ENCODE measurements at regions of chr4 and their contacts with region 1.

Region 1: DNA sequence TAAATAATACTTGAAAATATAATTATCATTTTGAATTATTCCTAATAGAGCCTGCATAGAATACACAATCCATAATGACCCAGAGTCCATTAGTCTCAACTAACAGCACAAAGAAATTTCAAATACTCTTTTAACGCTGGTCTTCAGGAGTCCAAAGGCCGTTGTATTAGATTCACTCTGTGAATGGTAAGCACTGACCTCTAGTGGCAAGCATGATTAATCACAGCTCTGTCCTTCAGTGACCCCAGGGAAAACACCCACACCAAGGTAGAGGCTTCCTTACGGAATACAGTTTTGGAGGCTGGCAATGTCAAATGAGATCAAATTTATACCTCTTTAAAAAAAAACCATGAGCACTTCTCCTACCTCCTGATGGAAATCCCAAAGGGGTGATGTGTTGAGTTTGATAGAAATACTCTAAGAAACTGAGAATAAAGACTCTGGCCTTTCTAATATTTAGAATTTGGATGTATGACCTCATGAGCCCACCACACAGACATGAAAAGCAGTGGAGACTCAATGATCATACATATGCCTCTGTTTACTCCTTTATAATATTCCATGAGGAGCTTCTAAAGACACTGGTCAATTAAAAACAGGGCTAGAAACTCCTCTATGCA is 147.2 kb upstream of the DKK2 start:
- DNase-seq: peak in 1 of 3 donors; percentile 14
- ATAC-seq: peak; percentile 90
- H3K4me3 ChIP-seq: no peak overlapping the region
- H3K4me1 ChIP-seq: no peaks in the 10 kb centered on the region
- CTCF ChIP-seq: peak; percentile 65

Region 2: DNA sequence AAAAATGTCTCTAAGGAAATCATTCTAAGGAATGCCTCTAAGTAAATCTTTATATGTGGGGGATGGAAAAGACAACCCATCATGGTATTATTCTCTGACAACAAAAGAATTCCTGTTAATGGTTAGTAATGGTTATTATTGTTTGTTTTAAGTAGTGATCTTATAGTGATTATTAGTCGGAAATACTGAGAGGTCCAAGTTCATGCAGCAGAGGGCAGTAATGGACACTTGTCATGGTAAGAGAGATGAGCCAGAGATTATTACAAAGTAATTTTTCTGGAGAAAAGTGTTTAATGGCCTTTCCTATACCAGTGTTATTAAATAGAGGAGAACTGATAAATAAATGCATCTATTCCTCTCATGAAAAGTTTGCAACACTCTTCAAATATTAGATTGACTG is 139.1 kb before region 1 on chr4:
- intact Hi-C with region 1: loop called in 1 of 2 experiments (anchors 10 kb)
- DNase-seq: no peak
- ATAC-seq: no peak
- H3K4me3 ChIP-seq: no peak overlapping the region
- H3K4me1 ChIP-seq: no peaks in the 10 kb centered on the region
- CTCF ChIP-seq: no peak

Region 3: DNA sequence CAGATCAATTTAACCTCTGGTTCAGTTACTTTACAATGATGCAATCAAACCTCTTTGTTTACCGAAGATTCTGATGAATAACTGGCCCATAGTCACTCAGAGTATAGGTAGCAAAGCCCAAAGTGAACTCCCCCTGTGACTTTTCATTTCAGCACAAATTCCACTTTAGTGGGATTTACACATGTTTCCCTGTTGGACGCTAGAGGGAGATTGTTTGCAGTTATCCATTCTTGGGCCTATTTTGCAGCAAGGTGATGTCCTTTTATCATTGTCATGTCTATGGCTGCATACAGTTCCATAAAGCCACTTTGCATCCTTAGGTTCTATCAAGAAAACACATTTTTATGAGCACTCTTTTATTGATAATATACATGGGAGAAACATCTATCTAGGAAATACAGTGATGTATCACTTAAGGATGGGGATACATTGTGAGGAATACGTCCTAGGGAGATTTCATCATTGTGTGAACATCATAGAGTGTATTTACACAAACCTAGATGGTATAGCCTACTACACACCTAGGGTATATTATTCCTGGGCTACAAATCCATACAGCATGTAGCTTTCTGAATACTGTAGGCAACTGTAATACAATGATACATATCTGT is 132.6 kb before region 1 on chr4:
- intact Hi-C with region 1: loop called (anchors 10 kb)
- DNase-seq: no peak
- ATAC-seq: no peak
- H3K4me3 ChIP-seq: no peak overlapping the region
- H3K4me1 ChIP-seq: no peaks in the 10 kb centered on the region
- CTCF ChIP-seq: no peak

Measured in mucosa of descending colon (tissue), 3 donors.